ENCODE measurements at regions of chr17 and their contacts with region 1.

Region 1: DNA sequence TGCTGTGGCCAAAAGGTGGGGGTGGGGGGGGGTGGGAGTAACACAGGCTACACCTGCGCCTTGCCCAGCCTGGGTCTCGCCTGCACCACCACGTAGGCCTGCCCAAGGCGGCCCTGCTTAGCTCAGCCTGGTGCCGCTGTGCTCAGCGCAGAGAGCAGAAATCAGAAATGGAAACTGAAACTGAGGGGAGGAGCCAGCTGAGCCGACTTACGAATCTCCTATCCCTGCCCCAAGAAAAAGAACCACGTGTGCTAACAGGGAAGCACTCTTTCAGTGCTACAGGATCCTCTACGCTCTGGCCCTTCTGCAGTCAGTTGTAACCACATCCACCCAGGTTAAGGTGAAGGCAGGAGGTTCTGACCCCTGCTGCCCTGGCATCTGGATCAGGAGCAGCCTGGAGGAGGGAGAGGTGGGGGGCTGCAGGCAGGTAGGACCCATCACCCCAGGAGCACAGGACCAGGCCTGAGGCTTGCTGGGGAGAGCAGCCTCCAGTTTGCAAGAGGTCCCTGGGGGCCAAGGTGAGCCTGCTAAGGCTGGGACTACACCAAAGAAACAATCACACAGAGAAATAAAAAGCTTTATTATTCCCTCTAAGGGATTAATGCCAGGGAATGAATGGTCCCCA is at the start of gene DHX58:
- DNase-seq: peak in 1 of 2 donors; percentile 83
- ATAC-seq: peak; percentile 90
- H3K4me3 ChIP-seq: peak within 1 kb of the TSS; percentile 44 to 56
- H3K27ac ChIP-seq: peak within 1 kb of the TSS; percentile 61 to 87
- H3K4me1 ChIP-seq: no peaks in the 10 kb centered on the region
- H3K27me3 ChIP-seq: no peaks in the 10 kb centered on the region
- total RNA-seq, gene DHX58: 11.6 to 24.5 TPM

Region 2: GRCh38 chr17:41966463-41967140 is 146.1 kb before region 1 on chr17 and contains the start of gene CNP:
- intact Hi-C with region 1: loop called (anchors 2 to 5 kb)
- DNase-seq: peak; percentile 95 to 97
- ATAC-seq: peak; percentile 97
- H3K4me3 ChIP-seq: peak within 1 kb of the TSS; percentile 84 to 85
- H3K27ac ChIP-seq: peak within 1 kb of the TSS in 1 of 2 donors; percentile 64
- H3K4me1 ChIP-seq: no peaks in the 10 kb centered on the region
- H3K27me3 ChIP-seq: no peaks in the 10 kb centered on the region
- total RNA-seq, gene CNP: 50.2 to 59.3 TPM

Region 3: DNA sequence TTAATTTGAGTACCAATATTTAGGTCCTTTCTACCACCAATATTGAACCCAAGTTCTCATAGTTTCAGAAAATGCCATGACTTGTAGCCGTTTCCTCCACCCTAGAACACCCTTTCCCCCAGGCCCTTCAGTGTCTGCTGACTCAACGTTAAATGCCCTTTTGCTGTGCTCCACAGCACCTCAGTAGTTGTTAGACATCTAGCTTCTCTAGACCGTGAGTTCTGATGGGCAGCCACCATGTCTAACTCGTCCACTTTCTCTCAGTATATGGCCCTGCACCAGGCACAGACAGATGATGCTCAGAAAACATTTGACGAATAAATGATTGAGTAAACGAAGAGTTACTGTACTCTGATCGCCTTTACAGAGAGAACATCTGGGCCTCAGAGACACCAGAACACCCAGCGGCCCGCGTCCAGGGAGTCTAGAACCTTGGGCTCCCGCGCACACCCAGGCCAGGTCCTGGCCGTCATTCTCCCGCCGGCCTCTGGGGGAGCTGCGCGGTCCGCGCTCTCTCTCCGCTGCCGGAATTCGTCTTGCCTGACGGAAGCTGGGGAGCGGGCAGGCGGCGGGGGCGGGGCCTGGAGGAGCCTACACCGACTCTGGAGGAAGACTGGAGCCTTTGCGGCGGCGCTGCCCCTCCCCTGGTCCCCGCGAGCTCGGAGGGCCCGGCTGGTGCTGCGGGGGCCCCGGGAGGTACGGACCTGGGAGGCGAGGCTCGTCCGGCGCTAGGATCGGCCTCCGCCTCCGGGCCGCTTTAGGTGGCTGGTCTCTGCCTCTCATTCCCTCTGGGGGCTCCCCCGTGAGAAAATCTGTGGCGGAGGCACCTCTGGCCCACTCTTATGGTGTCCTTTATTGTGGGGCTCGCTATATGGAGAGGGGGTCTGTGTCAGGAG is 92.9 kb before region 1 on chr17 and contains the start of gene NKIRAS2:
- intact Hi-C with region 1: loop called in 1 of 2 experiments (anchors 2 kb)
- DNase-seq: peak; percentile 97 to 98
- ATAC-seq: peak; percentile 92
- H3K4me3 ChIP-seq: peak within 1 kb of the TSS; percentile 64 to 96
- H3K27ac ChIP-seq: peak within 1 kb of the TSS; percentile 25 to 58
- H3K4me1 ChIP-seq: no peaks in the 10 kb centered on the region
- H3K27me3 ChIP-seq: no peaks in the 10 kb centered on the region
- total RNA-seq, gene NKIRAS2: 25.3 to 28.5 TPM

Region 4: GRCh38 chr17:42027961-42028790 is 84.5 kb before region 1 on chr17:
- intact Hi-C with region 1: loop called (anchors 2 to 5 kb)
- DNase-seq: no peak
- ATAC-seq: no peak
- H3K4me3 ChIP-seq: no peak overlapping the region
- H3K27ac ChIP-seq: no peak overlapping the region
- H3K4me1 ChIP-seq: no peaks in the 10 kb centered on the region
- H3K27me3 ChIP-seq: no peaks in the 10 kb centered on the region

Region 5: GRCh38 chr17:42067351-42068091 is 45.1 kb before region 1 on chr17:
- intact Hi-C with region 1: loop called (anchors 5 kb)
- DNase-seq: peak; percentile 67 to 89
- ATAC-seq: peak; percentile 75
- H3K4me3 ChIP-seq: no peak overlapping the region
- H3K27ac ChIP-seq: no peak overlapping the region
- H3K4me1 ChIP-seq: no peaks in the 10 kb centered on the region
- H3K27me3 ChIP-seq: no peaks in the 10 kb centered on the region